ENCODE measurements at regions of chr5 and their contacts with region 1.

Region 1: GRCh38 chr5:111512375-111513130 is at the start of gene STARD4:
- DNase-seq: peak; percentile 98
- H3K4me3 Mint-ChIP-seq: peak within 1 kb of the TSS; percentile 99
- H3K27ac Mint-ChIP-seq: peak within 1 kb of the TSS; percentile 99
- H3K4me1 Mint-ChIP-seq: peaks cover 51% of the 10 kb centered on the region
- H3K27me3 Mint-ChIP-seq: no peaks in the 10 kb centered on the region
- total RNA-seq, gene STARD4: 118 and 122 TPM in 2 replicates

Region 2: DNA sequence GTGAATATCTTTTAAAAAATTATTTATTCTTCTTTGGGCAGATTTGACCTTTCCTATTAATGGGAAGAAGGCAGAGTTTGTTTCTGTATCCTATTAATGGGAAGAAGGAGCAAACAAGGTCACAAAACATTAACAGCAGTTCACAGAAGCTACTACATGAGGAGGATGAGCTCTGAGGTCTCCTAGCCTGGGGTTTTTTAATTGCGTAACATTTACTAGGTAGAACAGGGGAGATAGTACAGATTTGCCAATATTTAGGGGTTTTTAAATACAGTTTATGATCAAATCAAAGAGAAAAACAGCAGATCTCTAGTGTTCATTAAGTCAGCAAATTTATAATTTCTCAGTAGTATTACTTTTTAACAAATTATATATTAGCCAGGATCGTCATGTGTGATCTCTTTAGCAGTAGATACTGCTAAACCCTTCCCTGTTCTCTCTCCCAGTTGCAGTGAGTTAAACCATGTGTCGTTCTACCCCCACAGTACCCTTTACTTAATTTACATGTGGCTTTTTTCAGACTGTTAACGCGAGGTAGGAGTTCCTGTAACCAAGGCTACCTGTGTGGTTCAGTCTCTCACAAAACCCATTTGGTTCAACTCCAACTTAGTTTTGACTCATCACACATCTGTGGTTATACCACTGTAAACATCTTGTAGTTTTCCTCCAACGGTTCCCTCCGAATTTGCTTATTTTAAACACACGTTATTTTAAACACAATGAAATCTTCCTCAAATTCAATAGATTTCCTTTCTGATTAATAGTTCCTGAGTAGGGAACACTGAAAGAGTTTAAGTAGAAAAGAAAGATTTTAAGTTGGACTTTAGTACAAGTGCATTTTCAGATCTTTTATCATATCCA is 760.4 kb before region 1 on chr5:
- intact Hi-C with region 1: loop called (anchors 5 kb)
- DNase-seq: peak; percentile 85
- H3K4me3 Mint-ChIP-seq: peak overlapping the region; percentile 62
- H3K27ac Mint-ChIP-seq: peak overlapping the region; percentile 93
- H3K4me1 Mint-ChIP-seq: peaks cover 42% of the 10 kb centered on the region
- H3K27me3 Mint-ChIP-seq: no peaks in the 10 kb centered on the region

Region 3: DNA sequence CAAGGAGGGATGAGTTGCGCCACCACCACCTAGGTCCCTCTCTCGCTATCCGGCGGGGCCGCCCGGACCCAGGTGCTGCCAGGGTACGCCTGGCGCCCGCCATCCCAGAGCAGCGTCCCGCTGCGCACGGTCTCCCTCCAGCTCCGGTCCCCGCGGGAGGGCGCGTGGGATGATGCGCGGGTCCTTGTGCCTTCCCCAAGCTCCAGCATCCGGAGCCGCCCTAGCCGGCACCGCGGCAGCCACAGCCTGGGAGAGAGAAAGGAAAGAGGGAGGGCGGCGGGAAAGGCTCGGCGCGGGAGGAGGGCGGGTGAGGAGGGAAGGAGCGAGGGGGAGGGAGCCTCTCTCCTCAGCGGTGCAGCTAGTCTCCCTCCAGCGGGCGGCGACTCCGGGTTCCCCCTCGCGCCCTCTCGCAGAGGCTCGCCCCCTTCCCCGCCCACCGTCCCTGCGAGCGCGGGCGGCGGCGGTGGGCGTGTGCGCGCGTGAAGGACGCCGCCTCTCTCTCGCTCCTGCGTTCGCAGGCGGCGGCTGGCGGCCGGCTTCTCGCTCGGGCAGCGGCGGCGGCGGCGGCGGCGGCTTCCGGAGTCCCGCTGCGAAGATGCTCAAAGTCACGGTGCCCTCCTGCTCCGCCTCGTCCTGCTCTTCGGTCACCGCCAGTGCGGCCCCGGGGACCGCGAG is 288.5 kb before region 1 on chr5 and contains the start of gene CAMK4:
- intact Hi-C with region 1: loop called (anchors 2 kb)
- DNase-seq: peak; percentile 94
- H3K4me3 Mint-ChIP-seq: peak within 1 kb of the TSS; percentile 97
- H3K27ac Mint-ChIP-seq: peak within 1 kb of the TSS; percentile 95
- H3K4me1 Mint-ChIP-seq: peaks cover 35% of the 10 kb centered on the region
- H3K27me3 Mint-ChIP-seq: peaks cover 2% of the 10 kb centered on the region
- total RNA-seq, gene CAMK4: 47.7 and 49.5 TPM in 2 replicates

Region 4: GRCh38 chr5:111337688-111338087 is 174.9 kb before region 1 on chr5:
- intact Hi-C with region 1: loop called (anchors 1 kb)
- DNase-seq: peak; percentile 59
- H3K4me3 Mint-ChIP-seq: no peak overlapping the region
- H3K27ac Mint-ChIP-seq: peak overlapping the region; percentile 80
- H3K4me1 Mint-ChIP-seq: peaks cover 24% of the 10 kb centered on the region
- H3K27me3 Mint-ChIP-seq: no peaks in the 10 kb centered on the region

Region 5: DNA sequence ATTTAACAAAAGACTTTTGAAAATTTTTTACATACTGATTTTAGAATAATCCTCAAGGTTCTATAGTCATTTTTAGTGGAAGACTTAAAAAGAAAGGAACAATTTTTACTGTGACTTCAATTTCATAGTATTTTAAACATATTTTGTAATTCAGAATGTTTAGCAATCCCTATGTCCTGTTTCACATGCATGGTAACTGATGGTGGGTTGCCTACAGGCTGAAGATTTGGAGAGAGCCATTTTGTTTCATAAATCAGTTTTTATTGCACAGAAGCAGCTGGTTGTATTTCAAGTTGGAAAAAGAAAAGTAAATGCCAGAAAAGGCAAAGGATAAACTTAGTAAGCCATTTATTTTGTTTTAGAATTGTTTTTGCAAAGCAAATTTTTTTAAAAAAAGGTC is 24.2 kb before region 1 on chr5:
- intact Hi-C with region 1: no loop called
- DNase-seq: no peak
- H3K4me3 Mint-ChIP-seq: no peak overlapping the region
- H3K27ac Mint-ChIP-seq: no peak overlapping the region
- H3K4me1 Mint-ChIP-seq: peaks cover 12% of the 10 kb centered on the region
- H3K27me3 Mint-ChIP-seq: no peaks in the 10 kb centered on the region

Region 6: GRCh38 chr5:111530298-111530740 is 17.8 kb after region 1 on chr5:
- intact Hi-C with region 1: loop called (anchors 1 kb)
- DNase-seq: peak; percentile 95
- H3K4me3 Mint-ChIP-seq: peak overlapping the region; percentile 58
- H3K27ac Mint-ChIP-seq: peak overlapping the region; percentile 84
- H3K4me1 Mint-ChIP-seq: peaks cover 28% of the 10 kb centered on the region
- H3K27me3 Mint-ChIP-seq: no peaks in the 10 kb centered on the region

Region 7: DNA sequence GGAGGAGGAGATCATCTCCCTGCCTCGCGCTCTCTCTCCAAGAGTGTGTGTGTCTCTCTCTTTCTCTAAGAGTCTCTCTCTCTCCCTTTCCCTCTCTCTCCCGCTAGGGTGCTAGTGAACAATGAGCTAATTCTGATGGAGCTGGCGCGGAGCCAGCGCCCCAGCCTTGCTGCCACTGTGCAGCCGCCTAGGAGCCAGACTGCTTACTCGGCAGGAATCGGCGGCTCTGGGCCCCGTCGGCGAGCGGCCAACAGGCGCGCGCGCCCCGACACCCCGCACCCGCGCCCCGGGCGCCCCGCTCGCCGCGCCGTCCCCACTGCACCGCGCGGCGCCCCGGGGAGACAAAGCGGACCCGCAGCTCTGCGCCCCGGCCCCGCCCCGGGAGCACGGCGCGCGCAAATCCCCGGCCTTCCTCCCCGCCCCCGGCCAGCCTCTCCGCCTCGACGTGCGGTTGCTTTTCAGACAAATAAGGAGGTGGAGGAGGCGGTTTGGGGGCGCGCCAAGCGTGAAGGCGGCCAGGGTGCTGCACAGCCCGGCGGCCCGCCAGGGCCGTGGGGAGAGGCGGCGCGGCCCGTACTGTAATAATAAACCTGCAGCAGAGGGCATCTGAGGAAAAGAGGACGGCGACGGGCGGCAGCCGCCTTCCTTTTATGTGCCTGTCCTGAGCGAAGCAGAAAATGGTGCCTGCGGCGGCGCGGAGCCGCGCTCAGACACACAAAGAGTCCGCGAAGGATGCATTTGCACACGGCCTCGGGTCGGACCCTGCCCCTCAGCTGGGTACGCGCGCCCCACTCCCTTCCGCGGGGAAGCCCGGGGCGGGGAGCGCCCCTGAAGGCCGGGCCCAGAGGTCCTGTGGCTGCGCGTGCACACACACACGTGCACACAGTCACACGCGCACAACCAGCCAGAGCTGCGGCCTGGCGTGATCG is 245.1 kb after region 1 on chr5:
- intact Hi-C with region 1: loop called (anchors 1 kb)
- DNase-seq: peak; percentile 96
- H3K4me3 Mint-ChIP-seq: peak overlapping the region; percentile 89
- H3K27ac Mint-ChIP-seq: peak overlapping the region; percentile 93
- H3K4me1 Mint-ChIP-seq: peaks cover 23% of the 10 kb centered on the region
- H3K27me3 Mint-ChIP-seq: peaks cover 5% of the 10 kb centered on the region

Measured in activated CD4-positive, alpha-beta T cell treated with anti-CD3 and anti-CD28 coated beads, Interleukin-2, amount 10 ng/mL, durations not matched to agents 24 days and 14 days (primary cell).